ENCODE measurements at regions of chr13 and their contacts with region 1.

Region 1: GRCh38 chr13:70527599-70527998 is 419.3 kb upstream of the KLHL1 start:
- DNase-seq: no peak
- ATAC-seq: no peak
- H3K4me3 ChIP-seq: no peak overlapping the region
- H3K27ac ChIP-seq: no peak overlapping the region
- H3K4me1 ChIP-seq: no peaks in the 10 kb centered on the region
- H3K27me3 ChIP-seq: no peaks in the 10 kb centered on the region
- CTCF ChIP-seq: no peak
- EP300 ChIP-seq: no peak
- POLR2A ChIP-seq: no peak
- RAD21 ChIP-seq: no peak

Region 2: DNA sequence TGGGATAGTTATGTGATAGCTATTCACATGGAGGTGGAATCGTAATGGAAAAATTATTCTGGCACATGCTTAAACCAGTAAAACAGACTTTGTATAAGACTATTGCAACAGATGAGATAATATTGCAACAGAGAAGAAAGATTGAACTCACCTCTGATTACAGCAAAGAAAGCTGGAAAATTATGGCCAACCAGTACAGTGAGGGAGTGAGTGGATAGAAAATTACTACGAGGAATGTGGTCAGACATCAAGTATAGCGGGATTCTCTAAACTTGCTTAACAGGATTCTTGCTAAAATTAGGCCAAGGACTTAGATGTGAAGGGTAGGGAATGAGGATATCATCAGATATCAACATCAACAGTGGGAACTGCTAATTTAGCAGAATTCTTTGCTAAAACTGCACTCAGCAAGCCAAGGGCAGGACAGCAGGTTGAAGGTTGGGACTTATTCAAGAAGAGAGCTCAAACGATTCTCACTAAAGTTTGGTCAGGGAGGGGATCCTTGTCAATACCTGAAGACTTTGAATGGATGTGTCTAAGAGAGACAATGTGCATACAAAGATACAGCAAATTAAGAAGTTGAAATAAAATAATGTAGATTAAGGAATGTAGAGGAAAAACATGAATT is 21.7 kb before region 1 on chr13:
- CTCF ChIA-PET with region 1: no interaction called
- POLR2A ChIA-PET with region 1: interaction called, 12 read pairs
- RAD21 ChIA-PET with region 1: no interaction called
- SMC1A ChIA-PET with region 1: no interaction called
- in situ Hi-C with region 1: no loop called
- intact Hi-C with region 1: no loop called
- DNase-seq: no peak
- ATAC-seq: no peak
- H3K4me3 ChIP-seq: no peak overlapping the region
- H3K27ac ChIP-seq: no peak overlapping the region
- H3K4me1 ChIP-seq: no peaks in the 10 kb centered on the region
- H3K27me3 ChIP-seq: no peaks in the 10 kb centered on the region
- CTCF ChIP-seq: no peak
- EP300 ChIP-seq: no peak
- POLR2A ChIP-seq: no peak
- RAD21 ChIP-seq: no peak